MCF 10A (cell line): ENCODE measurements at regions of chr6 and their contacts with region 1.

Region 1: GRCh38 chr6:82363351-82364086 is at the start of gene TPBG:
- DNase-seq: peak; percentile 85
- H3K4me3 Mint-ChIP-seq: peak within 1 kb of the TSS; percentile 87
- H3K27ac Mint-ChIP-seq: peak within 1 kb of the TSS; percentile 94
- H3K4me1 Mint-ChIP-seq: peaks cover 32% of the 10 kb centered on the region
- H3K27me3 Mint-ChIP-seq: no peaks in the 10 kb centered on the region
- CTCF ChIP-seq: peak; percentile 23
- total RNA-seq, gene TPBG: 72.9 and 96.9 TPM in 2 replicates

Region 2: GRCh38 chr6:82270881-82271645 is 92.5 kb before region 1 on chr6:
- CTCF ChIA-PET with region 1: interaction called, 6 read pairs
- POLR2A ChIA-PET with region 1: interaction called, 6 read pairs
- intact Hi-C with region 1: loop called (anchors 1 kb)
- DNase-seq: peak; percentile 60
- H3K4me3 Mint-ChIP-seq: no peak overlapping the region
- H3K27ac Mint-ChIP-seq: no peak overlapping the region
- H3K4me1 Mint-ChIP-seq: peaks cover 9% of the 10 kb centered on the region
- H3K27me3 Mint-ChIP-seq: no peaks in the 10 kb centered on the region
- CTCF ChIP-seq: peak; percentile 55

Region 3: DNA sequence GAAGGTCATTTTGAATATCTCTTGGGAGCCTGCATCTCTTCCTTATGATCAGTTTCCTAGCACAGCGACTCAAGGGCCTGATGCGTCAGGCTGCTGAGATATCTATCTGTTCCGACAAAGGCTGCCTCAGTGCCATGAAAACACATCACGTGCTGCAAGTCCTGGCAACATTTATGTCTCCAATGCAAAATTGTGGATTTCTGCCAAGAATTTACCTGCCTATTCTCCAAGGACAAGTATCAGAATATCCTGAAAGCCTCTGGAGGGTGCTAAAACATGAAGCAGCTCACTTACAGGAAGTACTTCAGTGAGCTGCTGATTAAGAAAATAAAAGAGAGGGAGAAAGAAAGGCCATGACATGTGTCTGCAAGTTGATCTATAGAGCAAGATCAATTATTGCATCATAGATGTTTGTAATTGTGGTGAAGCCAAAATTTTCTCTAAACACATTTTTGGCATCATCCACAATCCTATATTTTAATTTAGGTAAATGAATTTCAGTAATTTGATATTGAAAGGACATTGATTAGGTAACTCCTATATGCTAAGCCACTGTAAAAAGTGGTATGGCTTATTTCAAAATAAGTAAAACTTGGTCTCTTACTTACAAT is 25.8 kb before region 1 on chr6:
- CTCF ChIA-PET with region 1: interaction called, 8 read pairs
- POLR2A ChIA-PET with region 1: interaction called, 17 read pairs
- intact Hi-C with region 1: no loop called
- DNase-seq: peak; percentile 83
- H3K4me3 Mint-ChIP-seq: no peak overlapping the region
- H3K27ac Mint-ChIP-seq: no peak overlapping the region
- H3K4me1 Mint-ChIP-seq: no peaks in the 10 kb centered on the region
- H3K27me3 Mint-ChIP-seq: no peaks in the 10 kb centered on the region
- CTCF ChIP-seq: no peak

Region 4: GRCh38 chr6:82381278-82381677 is 17.8 kb after region 1 on chr6:
- CTCF ChIA-PET with region 1: interaction called, 3 read pairs
- POLR2A ChIA-PET with region 1: interaction called, 67 read pairs
- intact Hi-C with region 1: no loop called
- DNase-seq: no peak
- H3K4me3 Mint-ChIP-seq: no peak overlapping the region
- H3K27ac Mint-ChIP-seq: no peak overlapping the region
- H3K4me1 Mint-ChIP-seq: peaks cover 19% of the 10 kb centered on the region
- H3K27me3 Mint-ChIP-seq: no peaks in the 10 kb centered on the region
- CTCF ChIP-seq: no peak

Region 5: GRCh38 chr6:82408952-82409431 is 45.5 kb after region 1 on chr6:
- CTCF ChIA-PET with region 1: interaction called, 4 read pairs
- POLR2A ChIA-PET with region 1: interaction called, 34 read pairs
- intact Hi-C with region 1: no loop called
- DNase-seq: peak; percentile 90
- H3K4me3 Mint-ChIP-seq: peak overlapping the region; percentile 22
- H3K27ac Mint-ChIP-seq: peak overlapping the region; percentile 95
- H3K4me1 Mint-ChIP-seq: peaks cover 47% of the 10 kb centered on the region
- H3K27me3 Mint-ChIP-seq: no peaks in the 10 kb centered on the region
- CTCF ChIP-seq: no peak

Region 6: GRCh38 chr6:82589509-82590206 is 226.1 kb after region 1 on chr6:
- CTCF ChIA-PET with region 1: no interaction called
- POLR2A ChIA-PET with region 1: no interaction called
- intact Hi-C with region 1: loop called (anchors 1 kb)
- DNase-seq: peak; percentile 72
- H3K4me3 Mint-ChIP-seq: no peak overlapping the region
- H3K27ac Mint-ChIP-seq: no peak overlapping the region
- H3K4me1 Mint-ChIP-seq: no peaks in the 10 kb centered on the region
- H3K27me3 Mint-ChIP-seq: no peaks in the 10 kb centered on the region
- CTCF ChIP-seq: peak; percentile 30